ENCODE measurements at regions of chr4 and their contacts with region 1.

Region 1: DNA sequence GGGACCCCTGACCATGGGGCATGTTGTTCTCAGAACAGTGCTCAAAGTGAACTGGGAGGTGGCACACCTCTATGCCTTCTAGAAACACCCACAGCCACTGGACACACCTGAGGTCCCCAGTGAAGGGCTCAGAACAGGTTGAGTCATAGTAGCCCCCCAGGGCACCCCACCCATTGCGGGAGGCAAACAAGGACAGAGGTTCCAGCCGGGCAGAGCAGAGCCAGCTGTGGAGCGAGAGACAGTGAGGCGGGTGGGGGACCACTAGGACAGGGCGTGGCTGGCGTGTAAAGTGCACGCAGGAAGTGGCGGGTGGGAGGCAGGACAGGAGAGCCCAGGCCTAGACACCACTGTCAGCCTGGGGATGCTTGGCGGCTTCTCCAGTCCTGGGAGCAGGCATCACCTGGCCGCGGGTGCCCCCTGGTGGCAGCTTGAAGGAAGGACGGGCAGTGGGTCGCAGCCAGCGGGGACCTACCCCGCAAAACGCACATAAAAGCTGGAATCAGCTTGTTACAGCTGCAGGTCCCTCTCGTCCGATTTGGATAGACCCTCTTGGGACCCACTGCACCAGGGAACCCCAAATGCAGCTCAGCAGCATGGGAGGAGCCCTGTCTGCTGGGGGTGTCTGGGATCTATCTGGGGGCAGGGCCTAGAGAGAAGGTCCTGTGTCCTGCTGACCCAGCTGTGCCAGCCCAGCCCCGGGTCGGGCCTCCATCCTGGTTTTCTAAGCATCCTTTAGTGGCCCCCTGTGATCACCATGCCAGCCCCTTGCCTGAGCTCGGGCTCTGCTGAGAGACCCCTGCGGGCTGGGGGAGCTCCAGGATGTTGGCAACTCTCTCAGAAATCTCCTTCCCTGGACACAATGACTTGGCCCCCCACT is 57.6 kb downstream of the WFS1 start:
- DNase-seq: no peak
- H3K4me3 ChIP-seq: no peak overlapping the region
- H3K27ac ChIP-seq: no peak overlapping the region
- H3K4me1 ChIP-seq: peaks cover 0 to 28% (median 3%) of the 10 kb centered on the region in 3 donors
- H3K27me3 ChIP-seq: peaks cover 0 to 19% (median 0%) of the 10 kb centered on the region in 4 donors
- CTCF ChIP-seq: peak; percentile 93 to 98 (median 96)
- POLR2A ChIP-seq: no peak

Region 2: GRCh38 chr4:5998333-5998936 is 328.8 kb before region 1 on chr4:
- intact Hi-C with region 1: loop called (anchors 10 kb)
- DNase-seq: no peak
- H3K4me3 ChIP-seq: no peak overlapping the region
- H3K27ac ChIP-seq: no peak overlapping the region
- H3K4me1 ChIP-seq: peaks cover 0 to 6% (median 0%) of the 10 kb centered on the region in 3 donors
- H3K27me3 ChIP-seq: peaks cover 0 to 67% (median 0%) of the 10 kb centered on the region in 4 donors
- CTCF ChIP-seq: peak; percentile 67 to 93 (median 85)
- POLR2A ChIP-seq: no peak

Region 3: DNA sequence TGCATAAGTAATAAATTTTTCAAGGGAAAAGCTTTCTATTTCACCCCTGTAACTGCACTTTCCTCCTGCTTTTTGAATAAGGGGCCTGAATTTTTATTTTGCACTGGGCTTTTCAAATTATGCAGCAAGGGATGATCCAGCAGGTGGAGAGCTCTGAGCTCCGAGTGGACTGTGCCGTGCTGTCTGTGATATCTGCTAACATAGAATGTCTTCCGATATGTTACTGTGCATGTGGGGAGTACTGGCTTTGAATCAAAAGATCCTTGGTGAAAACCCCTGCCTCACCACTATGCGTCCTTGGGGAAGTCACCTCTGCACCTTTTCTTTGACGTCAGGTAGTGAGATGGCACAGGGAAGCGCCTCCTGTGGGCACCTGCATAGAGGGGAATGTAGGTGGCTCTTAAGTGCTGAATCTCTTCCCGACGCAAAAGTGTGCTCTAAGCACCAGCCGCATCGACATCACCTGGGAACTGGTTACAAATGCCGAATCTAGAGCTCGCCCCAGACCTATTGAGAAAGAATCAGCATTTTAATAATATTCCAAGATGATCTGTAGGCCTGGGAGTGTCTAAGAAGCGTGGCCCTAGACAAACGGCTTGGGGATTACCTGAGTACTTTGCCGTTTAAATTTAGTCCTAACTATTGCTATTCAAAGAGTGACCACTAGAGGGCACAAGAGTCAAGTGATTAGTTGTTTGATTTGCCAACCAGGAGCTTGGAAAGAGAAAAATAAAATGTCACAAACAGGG is 76.9 kb before region 1 on chr4:
- intact Hi-C with region 1: loop called (anchors 2 kb)
- DNase-seq: no peak
- H3K4me3 ChIP-seq: no peak overlapping the region
- H3K27ac ChIP-seq: no peak overlapping the region
- H3K4me1 ChIP-seq: peaks cover 0 to 10% (median 0%) of the 10 kb centered on the region in 3 donors
- H3K27me3 ChIP-seq: peaks cover 0 to 56% (median 2%) of the 10 kb centered on the region in 4 donors
- CTCF ChIP-seq: peak; percentile 47 to 88 (median 82)
- POLR2A ChIP-seq: no peak

Region 4: GRCh38 chr4:6546681-6547447 is 219.6 kb after region 1 on chr4:
- intact Hi-C with region 1: loop called (anchors 10 kb)
- DNase-seq: no peak
- H3K4me3 ChIP-seq: no peak overlapping the region
- H3K27ac ChIP-seq: no peak overlapping the region
- H3K4me1 ChIP-seq: peaks cover 0 to 8% (median 0%) of the 10 kb centered on the region in 3 donors
- H3K27me3 ChIP-seq: peaks cover 0 to 57% (median 0%) of the 10 kb centered on the region in 4 donors
- CTCF ChIP-seq: peak; percentile 69 to 89 (median 79)
- POLR2A ChIP-seq: no peak

Region 5: GRCh38 chr4:6562931-6563901 is 235.9 kb after region 1 on chr4:
- intact Hi-C with region 1: no loop called
- DNase-seq: no peak
- H3K4me3 ChIP-seq: peak overlapping the region; percentile 26 to 68 (median 54)
- H3K27ac ChIP-seq: peak overlapping the region in 1 of 4 donors; percentile 12
- H3K4me1 ChIP-seq: peaks cover 8 to 35% (median 17%) of the 10 kb centered on the region in 3 donors
- H3K27me3 ChIP-seq: peaks cover 0 to 74% (median 7%) of the 10 kb centered on the region in 4 donors
- CTCF ChIP-seq: no peak
- POLR2A ChIP-seq: no peak

Region 6: DNA sequence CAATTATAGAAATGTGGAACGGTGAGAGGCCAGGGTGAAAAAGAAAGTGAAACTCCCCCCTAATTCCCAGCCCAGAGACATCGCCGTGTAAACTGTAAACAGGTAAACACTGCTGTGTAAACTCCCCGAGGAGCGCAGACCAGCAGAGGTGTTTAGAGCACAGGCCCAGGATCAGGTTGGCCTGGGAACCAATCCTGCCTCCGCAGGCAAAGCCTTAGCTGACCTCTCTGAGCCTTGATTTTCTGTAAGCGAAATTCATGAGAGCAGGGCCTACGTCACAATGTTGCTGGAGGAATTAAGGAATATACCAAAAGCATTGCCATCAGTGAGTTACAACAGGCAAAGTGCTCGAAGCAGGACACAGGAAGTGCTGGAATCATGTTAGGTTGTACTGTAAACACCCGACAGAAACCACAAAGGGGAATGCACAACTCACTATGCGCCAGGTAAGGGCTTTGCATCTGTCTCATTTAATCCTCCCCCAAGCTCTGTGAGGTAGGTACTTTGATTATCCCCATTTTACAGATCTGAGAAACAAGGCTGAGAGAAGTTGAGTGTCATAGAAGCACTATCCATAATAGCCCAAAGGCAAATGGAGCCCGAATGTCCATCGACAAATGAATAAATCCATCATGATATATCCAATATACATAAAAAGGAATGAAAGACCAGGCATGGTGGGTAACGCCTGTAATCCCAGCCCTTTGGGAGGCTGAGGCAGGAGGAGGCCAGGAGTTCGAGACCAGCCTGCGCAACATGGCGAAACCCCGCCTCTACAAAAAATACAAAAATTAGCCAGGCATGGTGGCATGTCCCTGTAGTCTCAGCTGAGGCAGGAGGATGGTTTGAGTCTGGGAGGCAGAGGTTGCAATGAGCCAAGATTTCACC is 424.6 kb after region 1 on chr4:
- intact Hi-C with region 1: no loop called
- DNase-seq: no peak
- H3K4me3 ChIP-seq: no peak overlapping the region
- H3K27ac ChIP-seq: peak overlapping the region; percentile 3 to 89 (median 84)
- H3K4me1 ChIP-seq: peaks cover 34 to 75% (median 39%) of the 10 kb centered on the region in 3 donors
- H3K27me3 ChIP-seq: no peaks in the 10 kb centered on the region
- CTCF ChIP-seq: no peak
- POLR2A ChIP-seq: no peak